ENCODE measurements at regions of chr4 and their contacts with region 1.

Region 1: DNA sequence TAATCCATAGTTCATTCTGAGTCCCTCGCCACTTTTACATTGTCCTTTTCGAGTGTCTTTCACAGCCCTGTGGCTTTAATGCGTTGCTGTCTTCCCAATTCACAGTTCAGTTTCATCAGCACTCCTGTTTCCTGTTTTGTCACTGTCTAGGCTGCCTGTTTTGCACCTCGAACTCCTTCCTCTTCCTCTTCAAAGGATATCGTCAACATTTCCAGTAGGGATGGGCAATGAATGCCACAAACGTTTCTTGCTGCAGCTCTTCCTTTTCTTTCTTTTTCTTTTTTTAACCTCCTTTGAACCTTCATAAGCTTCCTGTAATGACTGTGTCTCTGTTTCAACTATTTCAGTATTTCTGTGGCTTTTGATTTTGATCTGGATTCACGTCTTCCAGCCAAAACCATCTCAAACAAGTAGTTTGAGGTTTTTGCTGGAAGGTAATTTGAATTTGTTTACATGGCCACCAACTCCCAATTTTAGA is 105.4 kb downstream of the ANXA3 start:
- DNase-seq: peak in 2 of 7 donors; percentile 17 to 43
- H3K4me3 ChIP-seq: no peak overlapping the region
- H3K27ac ChIP-seq: peak overlapping the region in 2 of 5 donors; percentile 46 to 74
- H3K4me1 ChIP-seq: peaks cover 4 to 20% of the 10 kb centered on the region in 2 donors
- H3K27me3 ChIP-seq: no peaks in the 10 kb centered on the region
- CTCF ChIP-seq: no peak
- POLR2A ChIP-seq: no peak

Region 2: DNA sequence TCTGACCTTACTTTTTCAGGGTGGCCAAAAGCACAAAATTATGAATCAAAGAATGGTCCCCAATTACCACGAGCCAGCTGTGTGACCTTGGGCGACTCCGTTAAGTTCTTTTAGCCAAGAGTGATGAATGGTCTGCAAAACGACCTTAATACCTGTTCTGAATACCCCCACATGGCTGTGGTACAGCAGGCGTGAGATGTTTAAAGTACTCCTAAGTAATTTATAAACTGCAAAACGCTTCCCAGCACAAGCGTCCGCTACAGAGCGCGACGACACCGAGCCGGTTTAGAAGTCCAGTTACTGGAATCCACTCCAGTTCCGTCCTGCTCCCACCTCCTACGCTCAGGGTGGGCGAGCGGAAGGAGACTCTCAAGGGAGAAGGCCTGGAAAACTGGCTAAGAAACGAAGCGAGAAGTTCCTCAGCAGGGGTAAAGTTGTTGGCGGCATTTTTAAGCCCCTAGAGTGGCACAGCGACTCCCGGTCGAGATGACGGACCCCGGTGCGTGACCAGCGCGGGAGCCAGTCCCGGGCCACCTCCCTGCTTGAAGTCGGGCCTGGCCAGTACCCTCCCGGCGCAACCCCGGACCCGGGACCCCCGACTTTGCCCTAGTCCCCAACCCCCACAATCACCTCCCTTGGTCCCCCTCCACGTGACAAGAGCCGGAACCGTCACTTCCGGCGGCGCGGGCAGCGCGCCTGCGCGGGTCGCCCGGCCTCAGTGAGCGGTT is 118.5 kb after region 1 on chr4:
- intact Hi-C with region 1: loop called in 1 of 2 experiments (anchors 10 kb)
- DNase-seq: peak; percentile 85 to 92 (median 88)
- H3K4me3 ChIP-seq: peak overlapping the region; percentile 38 to 96 (median 64)
- H3K27ac ChIP-seq: peak overlapping the region; percentile 88 to 99 (median 94)
- H3K4me1 ChIP-seq: peaks cover 0 to 37% of the 10 kb centered on the region in 2 donors
- H3K27me3 ChIP-seq: no peaks in the 10 kb centered on the region
- CTCF ChIP-seq: no peak
- POLR2A ChIP-seq: peak; percentile 14 to 32

Measured in adrenal gland (tissue), 19 donors.